Adrenal gland (tissue), 19 donors: ENCODE measurements at regions of chr22 and their contacts with region 1.

Region 1: GRCh38 chr22:17950651-17951214 is 73.6 kb downstream of the MICAL3 start:
- DNase-seq: peak in 4 of 7 donors; percentile 27 to 61 (median 54)
- H3K4me3 ChIP-seq: no peak overlapping the region
- H3K27ac ChIP-seq: peak overlapping the region in 4 of 5 donors; percentile 33 to 80 (median 66)
- H3K4me1 ChIP-seq: peaks cover 26 to 33% of the 10 kb centered on the region in 2 donors
- H3K27me3 ChIP-seq: no peaks in the 10 kb centered on the region
- CTCF ChIP-seq: no peak
- POLR2A ChIP-seq: no peak

Region 2: DNA sequence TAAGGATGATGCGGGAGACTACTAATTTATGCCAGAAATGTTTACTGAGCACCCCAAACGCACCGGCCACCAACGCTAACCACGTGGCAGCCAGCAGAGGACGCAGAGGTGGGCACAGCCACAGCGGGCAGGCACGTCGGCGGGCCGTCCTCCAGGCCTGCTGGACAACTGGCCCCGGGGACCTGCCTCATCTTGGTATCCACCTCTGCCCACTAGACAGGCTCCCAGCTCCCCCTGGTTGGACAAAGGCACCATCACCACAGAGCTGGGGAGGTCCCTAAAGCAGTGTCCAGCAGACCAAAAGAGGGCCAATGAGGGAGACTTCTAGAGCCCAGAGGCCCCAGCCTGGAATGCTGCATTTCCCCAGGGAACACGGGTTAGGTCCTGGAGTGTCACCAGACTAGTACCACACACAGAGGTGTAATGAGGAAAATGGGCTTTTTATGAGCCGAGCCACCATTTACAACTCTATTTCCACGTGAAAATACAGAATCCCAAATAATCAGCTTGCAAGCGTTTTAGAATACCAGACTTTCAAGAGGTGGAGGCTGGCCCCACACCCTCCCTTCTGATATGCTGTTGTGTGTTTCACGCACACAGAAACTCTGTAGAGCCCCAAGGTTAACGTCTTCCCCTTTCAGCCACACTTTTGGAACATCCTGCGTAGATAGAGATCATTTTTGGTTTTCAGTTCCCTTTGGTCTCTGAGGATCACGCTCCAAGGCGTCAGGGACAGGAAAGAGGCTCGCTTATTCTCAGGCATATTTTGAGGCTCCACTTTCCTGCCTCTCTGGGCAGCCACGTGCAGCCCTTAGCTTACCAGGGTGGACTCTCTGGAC is 152.8 kb before region 1 on chr22:
- intact Hi-C with region 1: no loop called
- DNase-seq: peak in 1 of 7 donors; percentile 34
- H3K4me3 ChIP-seq: no peak overlapping the region
- H3K27ac ChIP-seq: no peak overlapping the region
- H3K4me1 ChIP-seq: no peaks in the 10 kb centered on the region
- H3K27me3 ChIP-seq: no peaks in the 10 kb centered on the region
- CTCF ChIP-seq: no peak
- POLR2A ChIP-seq: no peak

Region 3: GRCh38 chr22:17891481-17892167 is 59.1 kb before region 1 on chr22:
- intact Hi-C with region 1: loop called in 1 of 2 experiments (anchors 10 kb)
- DNase-seq: no peak
- H3K4me3 ChIP-seq: no peak overlapping the region
- H3K27ac ChIP-seq: no peak overlapping the region
- H3K4me1 ChIP-seq: peaks cover 7 to 12% of the 10 kb centered on the region in 2 donors
- H3K27me3 ChIP-seq: no peaks in the 10 kb centered on the region
- CTCF ChIP-seq: peak in 1 of 6 experiments; percentile 16
- POLR2A ChIP-seq: no peak

Region 4: GRCh38 chr22:18001040-18001893 is 50.5 kb after region 1 on chr22:
- intact Hi-C with region 1: no loop called
- DNase-seq: peak; percentile 90 to 97 (median 94)
- H3K4me3 ChIP-seq: peak overlapping the region; percentile 8 to 98 (median 46)
- H3K27ac ChIP-seq: peak overlapping the region; percentile 40 to 98 (median 98)
- H3K4me1 ChIP-seq: peaks cover 7 to 21% of the 10 kb centered on the region in 2 donors
- H3K27me3 ChIP-seq: no peaks in the 10 kb centered on the region
- CTCF ChIP-seq: peak in 4 of 6 experiments; percentile 50 to 62 (median 58)
- POLR2A ChIP-seq: peak; percentile 72 to 90